Stomach (tissue), 19 donors: ENCODE measurements at regions of chr3 and their contacts with region 1.

Region 1: DNA sequence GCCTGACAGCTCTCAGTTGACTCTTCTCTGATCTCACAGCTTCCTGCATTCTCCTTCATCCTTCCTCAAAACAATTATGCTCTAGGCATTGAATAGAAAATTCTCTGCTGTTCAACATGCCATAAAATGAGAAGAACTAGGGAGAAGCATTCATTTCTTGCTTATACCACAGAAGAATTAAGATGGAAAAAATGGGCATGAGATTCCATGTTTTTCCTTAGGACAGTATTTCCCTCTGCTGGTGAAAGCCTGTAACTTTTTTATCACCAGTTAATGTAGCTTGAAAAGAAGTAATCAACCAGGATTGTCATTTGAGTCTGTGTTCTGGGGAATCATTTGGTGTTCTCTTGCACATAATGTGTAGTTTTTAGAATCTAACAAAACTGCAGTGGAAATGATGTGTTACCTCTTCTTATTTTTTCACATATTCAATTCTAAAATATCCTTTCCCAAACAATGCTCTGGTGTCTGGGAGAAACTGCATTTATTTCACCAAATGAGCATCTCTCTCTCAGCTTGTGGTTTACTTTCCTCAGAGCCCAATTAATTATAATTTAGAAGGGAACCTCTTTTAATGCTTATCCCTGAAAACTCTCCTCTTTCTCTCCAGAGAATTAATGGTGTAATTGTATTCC is 92.8 kb upstream of the DCBLD2 start:
- DNase-seq: peak in 1 of 2 donors; percentile 65
- H3K4me3 ChIP-seq: no peak overlapping the region
- H3K27ac ChIP-seq: no peak overlapping the region
- H3K4me1 ChIP-seq: no peaks in the 10 kb centered on the region
- H3K27me3 ChIP-seq: no peaks in the 10 kb centered on the region
- CTCF ChIP-seq: peak in 5 of 7 experiments; percentile 53 to 70 (median 55)
- EP300 ChIP-seq: no peak
- POLR2A ChIP-seq: no peak

Region 2: DNA sequence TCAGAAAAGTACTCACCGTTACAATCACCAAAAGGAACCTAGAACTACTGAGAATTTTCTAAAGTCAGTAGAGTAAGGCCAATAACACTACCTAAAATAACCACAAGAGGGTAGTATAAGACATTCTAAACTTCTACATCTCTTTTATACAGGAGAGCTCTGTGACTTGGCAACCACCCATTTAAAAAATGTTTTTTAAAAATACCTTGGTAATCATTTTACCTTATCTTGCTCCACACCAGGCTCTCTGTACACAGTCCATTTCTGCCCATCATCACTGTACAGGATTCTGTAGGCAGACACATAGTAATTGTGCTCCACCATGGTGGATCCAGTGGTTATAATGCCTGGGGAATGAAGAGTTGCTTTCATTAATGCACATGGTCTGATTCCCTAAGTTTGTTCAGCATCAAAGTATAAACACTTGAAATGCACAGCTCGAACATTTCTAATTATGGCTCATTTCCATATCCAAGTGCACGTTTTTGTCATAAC is 176.7 kb before region 1 on chr3:
- intact Hi-C with region 1: loop called (anchors 2 kb)
- DNase-seq: peak in 1 of 2 donors; percentile 76
- H3K4me3 ChIP-seq: no peak overlapping the region
- H3K27ac ChIP-seq: peak overlapping the region in 1 of 5 donors; percentile 1
- H3K4me1 ChIP-seq: peaks cover 0 to 19% (median 4%) of the 10 kb centered on the region in 4 donors
- H3K27me3 ChIP-seq: no peaks in the 10 kb centered on the region
- CTCF ChIP-seq: peak in 5 of 7 experiments; percentile 59 to 85 (median 78)
- EP300 ChIP-seq: no peak
- POLR2A ChIP-seq: no peak